IMR-90 (cell line): ENCODE measurements at regions of chr6 and their contacts with region 1.

Region 1: DNA sequence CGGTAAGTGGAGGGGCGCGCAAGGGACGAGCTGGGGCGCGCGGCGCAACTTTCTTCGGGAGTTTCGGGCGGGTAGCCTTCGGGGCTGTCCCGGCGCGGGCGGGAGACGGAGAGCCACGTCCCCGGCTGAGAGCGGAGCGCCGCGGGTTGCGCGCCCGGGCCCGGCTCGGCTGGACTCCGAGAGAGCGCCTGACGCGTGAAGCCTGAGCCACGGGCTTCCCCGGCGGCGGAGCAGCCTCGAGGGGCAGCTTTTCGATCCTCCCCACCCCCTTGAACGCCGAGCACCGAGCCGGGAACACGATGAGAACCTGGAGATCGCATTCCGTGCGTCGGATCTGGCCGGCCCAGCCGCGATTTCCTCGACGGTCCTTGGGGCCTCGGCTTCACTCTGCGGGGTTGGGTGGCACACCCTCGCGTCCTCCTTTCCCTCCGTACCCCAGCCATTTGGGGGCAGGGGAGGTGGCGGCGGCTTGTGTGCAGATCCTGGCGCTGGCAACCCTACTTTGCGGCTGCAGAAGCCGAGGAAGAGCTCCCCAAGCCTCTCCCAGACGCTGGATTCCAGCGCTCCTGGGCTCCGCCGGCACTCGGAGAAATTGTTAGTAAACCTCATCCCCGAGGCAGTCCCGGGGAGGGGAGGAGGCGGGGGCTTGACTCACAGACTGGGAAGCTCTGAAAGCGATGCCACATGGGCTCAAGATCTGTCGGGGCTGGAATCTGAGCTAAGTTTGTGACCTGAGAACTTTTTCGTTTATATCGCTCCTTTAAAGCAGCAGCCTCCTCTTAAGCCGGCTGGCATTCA is 572 bp downstream of the DSE start:
- DNase-seq: peak; percentile 94
- ATAC-seq: peak; percentile 78
- H3K4me3 ChIP-seq: peak overlapping the region; percentile 63
- H3K27ac ChIP-seq: peak overlapping the region; percentile 98
- H3K4me1 ChIP-seq: peaks cover 9% of the 10 kb centered on the region
- H3K27me3 ChIP-seq: no peaks in the 10 kb centered on the region
- CTCF ChIP-seq: no peak
- POLR2A ChIP-seq: peak; percentile 59; the same call in 1 of the 2 replicates
- RAD21 ChIP-seq: peak; percentile 28; the same call in 1 of the 2 replicates

Region 2: GRCh38 chr6:116287689-116288282 is 83.5 kb before region 1 on chr6:
- CTCF ChIA-PET with region 1: interaction called, 9 read pairs
- POLR2A ChIA-PET with region 1: interaction called, 3 read pairs
- dilution Hi-C with region 1: no loop called
- in situ Hi-C with region 1: no loop called
- intact Hi-C with region 1: loop called (anchors 5 kb)
- DNase-seq: peak; percentile 74
- ATAC-seq: peak; percentile 87
- H3K4me3 ChIP-seq: no peak overlapping the region
- H3K27ac ChIP-seq: no peak overlapping the region
- H3K4me1 ChIP-seq: no peaks in the 10 kb centered on the region; the same call in 1 of the 2 replicates
- H3K27me3 ChIP-seq: no peaks in the 10 kb centered on the region
- CTCF ChIP-seq: peak; percentile 88
- POLR2A ChIP-seq: no peak
- RAD21 ChIP-seq: peak; percentile 88

Region 3: DNA sequence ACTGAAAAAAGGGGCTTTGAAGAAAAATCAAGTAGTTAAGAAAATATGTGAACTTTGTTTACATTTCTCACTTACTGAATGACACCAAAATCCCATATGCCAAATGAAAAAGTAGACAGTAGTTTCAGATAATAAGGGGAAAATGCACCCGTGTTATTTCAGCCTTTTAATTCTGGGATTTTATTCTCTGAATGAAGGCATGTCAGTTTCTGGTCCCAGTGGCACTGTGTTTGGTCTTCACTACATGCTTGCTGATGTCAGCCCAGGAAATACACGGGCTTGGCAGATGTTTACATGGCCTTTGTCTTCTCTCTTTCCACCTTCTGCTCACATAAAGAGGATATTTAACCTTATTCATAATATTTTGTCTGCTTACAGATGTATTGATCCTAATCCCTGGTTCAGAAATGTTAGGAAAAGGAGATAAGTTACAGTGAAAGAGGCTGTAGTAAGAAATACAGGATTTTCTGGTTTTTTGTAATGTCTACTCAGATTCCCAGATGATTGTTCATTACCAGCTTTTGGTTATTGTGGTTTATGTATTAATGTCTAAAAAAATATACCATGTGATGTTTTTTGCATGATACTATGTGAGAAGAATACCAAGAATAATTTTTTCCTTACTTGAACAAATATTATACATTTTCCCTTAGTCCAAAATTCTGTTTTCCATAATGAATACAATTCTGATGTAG is 27.1 kb after region 1 on chr6:
- CTCF ChIA-PET with region 1: no interaction called
- POLR2A ChIA-PET with region 1: no interaction called
- dilution Hi-C with region 1: no loop called
- in situ Hi-C with region 1: no loop called
- intact Hi-C with region 1: loop called (anchors 1 kb)
- DNase-seq: peak; percentile 72
- ATAC-seq: peak; percentile 70
- H3K4me3 ChIP-seq: no peak overlapping the region
- H3K27ac ChIP-seq: peak overlapping the region; percentile 75
- H3K4me1 ChIP-seq: peaks cover 23% of the 10 kb centered on the region
- H3K27me3 ChIP-seq: no peaks in the 10 kb centered on the region
- CTCF ChIP-seq: no peak
- POLR2A ChIP-seq: no peak
- RAD21 ChIP-seq: no peak

Region 4: DNA sequence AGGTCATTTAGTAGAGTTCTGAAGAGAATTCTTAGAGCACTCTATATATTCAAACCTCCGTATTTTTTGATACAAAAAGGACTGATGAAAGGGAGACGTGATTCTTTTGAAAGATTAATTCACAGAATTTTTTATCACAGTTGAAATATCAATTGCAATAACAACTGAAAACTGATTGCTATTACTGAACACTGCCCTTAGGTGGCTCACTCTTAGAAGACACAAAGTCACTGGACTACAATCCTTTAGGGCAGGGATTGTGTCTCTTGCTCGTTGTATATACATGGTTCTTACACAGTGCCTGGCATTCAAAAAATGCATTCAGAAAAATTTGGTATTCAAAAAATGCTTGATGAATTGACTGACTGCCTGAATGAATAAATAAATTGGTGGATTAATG is 72.8 kb after region 1 on chr6:
- CTCF ChIA-PET with region 1: interaction called, 3 read pairs
- POLR2A ChIA-PET with region 1: no interaction called
- dilution Hi-C with region 1: no loop called
- in situ Hi-C with region 1: no loop called
- intact Hi-C with region 1: loop called (anchors 2 kb)
- DNase-seq: peak; percentile 51
- ATAC-seq: peak; percentile 38
- H3K4me3 ChIP-seq: no peak overlapping the region
- H3K27ac ChIP-seq: no peak overlapping the region
- H3K4me1 ChIP-seq: peaks cover 13% of the 10 kb centered on the region
- H3K27me3 ChIP-seq: no peaks in the 10 kb centered on the region
- CTCF ChIP-seq: peak; percentile 55
- POLR2A ChIP-seq: no peak
- RAD21 ChIP-seq: peak; percentile 39

Region 5: DNA sequence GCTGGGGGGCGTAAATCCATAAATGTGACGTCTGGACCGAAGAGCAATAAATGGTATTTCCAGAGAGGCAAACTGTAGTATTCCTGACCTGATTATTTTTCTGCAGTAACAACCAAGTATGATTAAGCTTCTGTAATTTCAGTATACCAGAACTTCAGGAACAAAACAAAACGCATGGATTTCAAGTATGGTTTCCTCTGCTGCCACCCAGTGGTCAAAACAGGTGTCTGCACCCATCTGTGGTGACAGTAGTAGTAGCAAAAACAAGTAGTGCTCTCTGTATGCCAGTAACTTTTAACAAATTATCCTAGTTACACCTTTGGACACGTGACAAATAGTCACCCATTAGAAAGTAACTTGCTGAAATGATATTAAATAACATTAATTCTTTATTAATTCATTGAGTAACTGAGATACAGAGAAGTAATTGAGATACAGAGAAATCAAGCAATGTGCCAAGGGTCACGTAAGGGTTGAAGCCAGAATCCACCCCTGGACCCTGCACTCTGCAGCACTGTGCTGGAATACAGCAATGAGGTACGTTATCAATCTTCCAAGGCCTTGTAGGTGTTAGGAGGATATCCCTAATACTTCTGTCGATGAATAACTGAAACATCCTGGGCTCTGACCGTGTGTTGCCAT is 190.2 kb after region 1 on chr6:
- CTCF ChIA-PET with region 1: no interaction called
- POLR2A ChIA-PET with region 1: no interaction called
- dilution Hi-C with region 1: no loop called
- in situ Hi-C with region 1: no loop called
- intact Hi-C with region 1: loop called (anchors 1 kb)
- DNase-seq: peak; percentile 75
- ATAC-seq: peak; percentile 72
- H3K4me3 ChIP-seq: no peak overlapping the region
- H3K27ac ChIP-seq: no peak overlapping the region
- H3K4me1 ChIP-seq: peaks cover 10% of the 10 kb centered on the region
- H3K27me3 ChIP-seq: no peaks in the 10 kb centered on the region
- CTCF ChIP-seq: peak; percentile 89
- POLR2A ChIP-seq: no peak
- RAD21 ChIP-seq: peak; percentile 88

Region 6: GRCh38 chr6:117034971-117035370 is 663.7 kb after region 1 on chr6:
- CTCF ChIA-PET with region 1: no interaction called
- POLR2A ChIA-PET with region 1: no interaction called
- dilution Hi-C with region 1: no loop called
- in situ Hi-C with region 1: no loop called
- intact Hi-C with region 1: no loop called
- DNase-seq: no peak
- ATAC-seq: no peak
- H3K4me3 ChIP-seq: no peak overlapping the region
- H3K27ac ChIP-seq: no peak overlapping the region
- H3K4me1 ChIP-seq: no peaks in the 10 kb centered on the region
- H3K27me3 ChIP-seq: no peaks in the 10 kb centered on the region
- CTCF ChIP-seq: no peak
- POLR2A ChIP-seq: no peak
- RAD21 ChIP-seq: no peak